Activated T-helper 1 cell treated with anti-CD3 and anti-CD28 coated beads, Interleukin-12 subunit alpha, Interleukin-12 subunit beta, Interleukin-2, Interleukin-4 antibody, amounts not matched to agents 30 ng/mL and 10 ng/mL and 1 ng/mL, durations not matched to agents 14 hours and 24 hours and 36 hours (primary cell): ENCODE measurements at regions of chr13 and their contacts with region 1.

Region 1: DNA sequence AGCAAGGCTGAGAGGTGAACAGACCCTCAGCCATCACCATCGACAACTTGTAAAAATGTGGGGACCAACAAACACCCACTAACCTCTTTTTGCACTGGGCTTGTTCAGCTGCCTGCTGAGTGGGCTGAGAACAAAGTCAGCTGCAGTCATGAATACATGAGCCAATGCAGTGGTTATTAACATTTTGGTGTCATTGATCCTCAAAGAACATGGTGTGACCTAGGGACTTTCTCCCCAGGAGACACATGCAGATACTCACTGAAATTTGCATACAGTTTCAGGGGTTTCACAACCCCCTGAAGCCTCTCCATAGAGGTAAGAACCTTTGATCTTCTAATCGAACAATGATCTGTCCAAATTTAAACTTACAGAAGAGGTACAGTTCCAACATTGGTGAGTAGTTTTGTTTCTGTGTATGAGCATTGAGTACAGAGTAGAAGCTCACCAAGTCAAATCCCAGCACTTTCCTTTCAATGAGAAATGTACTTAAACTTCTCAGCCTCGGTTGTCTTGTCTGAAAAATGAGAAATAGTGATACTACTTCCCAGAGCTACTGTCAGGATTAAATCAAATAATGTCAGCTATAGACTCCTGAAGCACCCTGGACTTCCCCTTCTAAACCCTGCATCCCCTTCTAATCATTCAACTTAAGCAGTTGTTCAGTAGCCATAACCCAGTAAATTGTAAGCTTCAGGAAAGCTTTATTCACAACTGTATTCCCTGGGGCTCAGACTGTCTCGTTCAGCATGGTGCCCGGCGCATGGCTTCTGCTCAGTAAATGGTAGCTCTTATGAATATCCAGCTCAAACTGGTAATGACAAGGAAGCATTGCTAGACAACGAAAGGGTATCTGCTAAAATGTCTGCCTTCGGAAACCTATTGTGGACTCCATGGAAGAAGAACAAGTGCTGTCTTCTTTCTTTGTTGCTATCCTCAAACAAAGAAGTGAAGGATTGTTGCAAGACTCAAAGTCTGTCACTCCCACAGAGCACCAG is 148.7 kb downstream of the FOXO1 start:
- DNase-seq: no peak
- H3K4me3 Mint-ChIP-seq: peak overlapping the region; percentile 62
- H3K27ac Mint-ChIP-seq: peak overlapping the region; percentile 69
- H3K4me1 Mint-ChIP-seq: peaks cover 83% of the 10 kb centered on the region
- H3K27me3 Mint-ChIP-seq: no peaks in the 10 kb centered on the region

Region 2: DNA sequence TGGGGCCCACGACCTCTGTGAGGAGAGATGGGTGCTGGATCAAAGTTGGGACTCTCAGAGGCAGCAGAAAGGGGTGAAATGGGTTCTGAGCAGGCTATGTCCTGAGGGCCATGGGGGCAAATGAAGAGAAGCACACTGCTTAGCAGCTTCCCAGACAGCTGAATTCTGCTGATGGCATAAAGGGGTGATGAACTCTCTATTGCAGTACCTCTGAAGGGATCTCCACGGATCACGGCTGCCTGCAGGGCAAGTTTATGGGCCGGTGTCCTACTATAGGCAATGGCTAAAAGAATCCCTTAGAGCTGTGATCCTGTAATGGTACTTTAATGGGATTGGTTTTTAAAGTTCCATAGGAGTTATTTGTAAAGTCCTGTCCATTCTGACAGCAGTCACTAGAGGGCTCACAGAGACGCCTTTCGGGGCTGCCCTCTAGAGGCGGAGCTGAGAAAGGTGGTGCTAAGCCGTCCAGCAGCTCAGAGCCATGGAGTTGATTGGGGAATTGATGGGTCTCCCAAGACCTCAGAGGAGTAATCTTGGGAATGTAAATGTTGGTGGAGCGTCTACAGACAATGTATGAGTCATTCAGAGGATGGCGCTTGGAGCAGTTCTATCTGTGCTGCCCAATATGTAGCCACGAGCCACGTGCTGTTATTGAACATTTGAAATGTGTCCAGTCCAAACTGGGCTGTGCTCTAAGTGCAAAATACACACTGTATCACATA is 575.1 kb before region 1 on chr13:
- intact Hi-C with region 1: loop called (anchors 5 kb)
- DNase-seq: peak; percentile 54
- H3K4me3 Mint-ChIP-seq: no peak overlapping the region
- H3K27ac Mint-ChIP-seq: no peak overlapping the region
- H3K4me1 Mint-ChIP-seq: peaks cover 6% of the 10 kb centered on the region
- H3K27me3 Mint-ChIP-seq: peaks cover 4% of the 10 kb centered on the region

Region 3: GRCh38 chr13:40190641-40191100 is 327.1 kb before region 1 on chr13:
- intact Hi-C with region 1: loop called (anchors 1 kb)
- DNase-seq: peak; percentile 58
- H3K4me3 Mint-ChIP-seq: peak overlapping the region; percentile 35
- H3K27ac Mint-ChIP-seq: peak overlapping the region; percentile 87
- H3K4me1 Mint-ChIP-seq: peaks cover 66% of the 10 kb centered on the region
- H3K27me3 Mint-ChIP-seq: no peaks in the 10 kb centered on the region

Region 4: GRCh38 chr13:40318366-40318765 is 199.4 kb before region 1 on chr13:
- intact Hi-C with region 1: loop called (anchors 5 kb)
- DNase-seq: no peak
- H3K4me3 Mint-ChIP-seq: no peak overlapping the region
- H3K27ac Mint-ChIP-seq: no peak overlapping the region
- H3K4me1 Mint-ChIP-seq: peaks cover 70% of the 10 kb centered on the region
- H3K27me3 Mint-ChIP-seq: no peaks in the 10 kb centered on the region

Region 5: DNA sequence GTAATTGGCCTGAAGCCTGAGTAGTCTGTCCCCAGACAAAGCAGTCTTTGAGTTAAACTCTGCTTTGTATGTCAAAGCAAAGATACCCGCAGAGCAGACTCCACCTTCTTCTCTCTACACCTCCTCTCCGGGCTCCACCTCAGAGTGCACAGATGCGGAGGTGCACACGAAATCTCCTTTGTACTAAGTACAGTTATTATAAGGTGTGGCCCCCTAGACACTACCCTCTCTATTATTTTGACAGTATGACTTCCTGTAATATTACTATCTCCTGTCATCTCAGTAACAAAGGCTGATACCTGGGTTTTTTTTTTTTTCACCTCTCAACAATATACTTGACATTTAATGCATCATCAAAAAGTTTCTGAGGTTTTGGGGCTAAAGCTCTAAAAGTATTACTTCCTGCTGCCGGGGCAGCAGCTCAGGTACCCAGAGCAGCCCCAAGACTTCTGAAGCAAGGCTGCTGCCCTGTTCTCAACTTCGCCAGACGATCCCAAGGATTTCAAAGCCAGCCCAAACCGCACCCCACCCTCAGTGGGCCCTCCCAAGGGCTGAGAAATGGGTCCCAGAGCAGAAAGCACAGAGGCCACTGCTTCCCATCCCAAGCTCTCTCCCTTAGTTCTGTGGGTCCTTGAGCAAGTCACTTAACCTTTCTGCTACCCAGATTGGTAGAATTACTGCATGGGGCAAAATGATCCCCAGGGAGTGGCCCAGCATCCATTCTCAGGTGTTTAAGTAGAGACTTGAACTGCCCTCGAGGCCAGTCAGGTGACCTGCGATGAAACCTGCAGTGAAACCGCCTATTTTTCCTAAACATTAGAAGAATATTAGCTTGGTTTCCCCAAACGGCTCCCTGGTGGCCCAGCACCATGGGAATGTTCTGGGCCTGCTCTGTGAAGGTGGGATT is 31.9 kb before region 1 on chr13:
- intact Hi-C with region 1: loop called (anchors 1 kb)
- DNase-seq: peak; percentile 50
- H3K4me3 Mint-ChIP-seq: peak overlapping the region; percentile 23
- H3K27ac Mint-ChIP-seq: peak overlapping the region; percentile 89
- H3K4me1 Mint-ChIP-seq: peaks cover 68% of the 10 kb centered on the region
- H3K27me3 Mint-ChIP-seq: no peaks in the 10 kb centered on the region

Region 6: GRCh38 chr13:40653527-40654318 is 135.9 kb after region 1 on chr13:
- intact Hi-C with region 1: loop called (anchors 1 kb)
- DNase-seq: no peak
- H3K4me3 Mint-ChIP-seq: peak overlapping the region; percentile 60
- H3K27ac Mint-ChIP-seq: peak overlapping the region; percentile 87
- H3K4me1 Mint-ChIP-seq: peaks cover 89% of the 10 kb centered on the region
- H3K27me3 Mint-ChIP-seq: no peaks in the 10 kb centered on the region

Region 7: GRCh38 chr13:41061075-41061913 is 543.5 kb after region 1 on chr13 and contains the start of gene WBP4:
- intact Hi-C with region 1: no loop called
- DNase-seq: peak; percentile 85
- H3K4me3 Mint-ChIP-seq: peak within 1 kb of the TSS; percentile 98
- H3K27ac Mint-ChIP-seq: peak within 1 kb of the TSS; percentile 99
- H3K4me1 Mint-ChIP-seq: peaks cover 72% of the 10 kb centered on the region
- H3K27me3 Mint-ChIP-seq: peaks cover 6% of the 10 kb centered on the region
- total RNA-seq, gene WBP4: 13.4 and 14.0 TPM in 2 replicates